Esophagus muscularis mucosa (tissue), 4 donors: ENCODE measurements at regions of chr11 and their contacts with region 1.

Region 1: GRCh38 chr11:7098235-7098832 is 9.5 kb downstream of the RBMXL2 start:
- DNase-seq: no peak
- H3K4me3 ChIP-seq: no peak overlapping the region
- H3K27ac ChIP-seq: no peak overlapping the region
- H3K4me1 ChIP-seq: no peaks in the 10 kb centered on the region
- H3K27me3 ChIP-seq: peaks cover 0 to 23% (median 6%) of the 10 kb centered on the region in 4 donors
- CTCF ChIP-seq: peak; percentile 41 to 50 (median 47)
- EP300 ChIP-seq: no peak
- POLR2A ChIP-seq: no peak

Region 2: DNA sequence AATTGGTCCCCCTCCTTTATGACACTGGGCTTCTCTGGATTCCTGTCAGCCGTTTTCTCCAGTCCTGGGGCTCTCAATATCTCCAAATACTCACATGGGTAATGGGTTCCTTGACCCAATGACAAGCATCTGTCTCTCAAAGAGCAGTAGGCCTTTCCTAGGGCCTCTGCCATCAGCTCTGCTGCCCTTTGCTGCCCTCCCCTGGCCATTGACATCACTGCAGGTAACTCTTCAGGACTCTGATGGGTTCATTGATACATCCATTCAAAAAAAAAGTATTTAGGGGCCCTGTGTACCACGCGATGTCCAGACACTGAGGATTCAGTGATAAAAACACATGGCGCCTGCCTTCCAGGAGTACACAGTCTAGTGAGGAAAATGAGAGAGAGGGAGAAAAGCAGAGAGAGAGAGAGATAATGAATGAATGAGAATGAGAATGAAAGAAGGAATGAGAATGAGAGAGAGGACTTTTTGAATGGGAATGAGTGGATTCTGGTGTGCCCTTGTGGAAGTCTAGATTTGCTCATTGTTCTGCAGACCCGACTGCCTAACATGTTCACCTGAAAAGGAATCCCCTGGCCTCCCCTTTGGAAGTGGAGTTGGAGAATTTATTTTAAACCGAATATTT is 344.4 kb after region 1 on chr11:
- intact Hi-C with region 1: loop called (anchors 5 kb)
- DNase-seq: no peak
- H3K4me3 ChIP-seq: no peak overlapping the region
- H3K27ac ChIP-seq: no peak overlapping the region
- H3K4me1 ChIP-seq: no peaks in the 10 kb centered on the region
- H3K27me3 ChIP-seq: no peaks in the 10 kb centered on the region
- CTCF ChIP-seq: peak; percentile 66 to 89 (median 73)
- EP300 ChIP-seq: no peak
- POLR2A ChIP-seq: no peak

Region 3: DNA sequence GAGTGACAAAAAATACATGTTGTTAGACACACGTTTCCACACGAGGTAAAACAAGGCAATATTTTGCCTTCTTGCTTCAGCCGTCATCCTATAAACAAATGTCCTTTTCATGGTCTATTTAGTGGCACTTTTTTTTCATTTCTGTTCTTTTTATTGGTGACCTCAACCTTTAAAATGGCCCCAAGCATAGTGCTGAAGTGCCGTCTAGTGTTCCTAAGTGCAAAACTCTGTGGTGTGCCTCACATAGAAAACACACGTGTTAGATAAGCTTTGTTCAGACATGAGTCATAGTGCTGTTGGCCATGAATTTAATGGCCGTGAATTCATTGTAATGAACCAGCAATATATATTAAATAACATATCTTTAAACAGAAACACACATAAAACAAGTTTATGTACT is 592.3 kb after region 1 on chr11:
- intact Hi-C with region 1: loop called (anchors 10 kb)
- DNase-seq: no peak
- H3K4me3 ChIP-seq: no peak overlapping the region
- H3K27ac ChIP-seq: no peak overlapping the region
- H3K4me1 ChIP-seq: no peaks in the 10 kb centered on the region
- H3K27me3 ChIP-seq: peaks cover 0 to 19% (median 0%) of the 10 kb centered on the region in 4 donors
- CTCF ChIP-seq: no peak
- EP300 ChIP-seq: no peak
- POLR2A ChIP-seq: no peak